Psoas muscle (tissue), 8 donors: ENCODE measurements at regions of chr6 and their contacts with region 1.

Region 1: GRCh38 chr6:73329201-73329600 is 24.9 kb downstream of the DPPA5 start:
- DNase-seq: no peak
- ATAC-seq: no peak
- H3K4me3 ChIP-seq: no peak overlapping the region
- H3K27ac ChIP-seq: no peak overlapping the region
- H3K4me1 ChIP-seq: no peaks in the 10 kb centered on the region
- H3K27me3 ChIP-seq: no peaks in the 10 kb centered on the region
- CTCF ChIP-seq: no peak

Region 2: GRCh38 chr6:73285674-73286283 is 43.4 kb before region 1 on chr6:
- intact Hi-C with region 1: loop called in 1 of 2 experiments (anchors 5 kb)
- DNase-seq: no peak
- ATAC-seq: no peak
- H3K4me3 ChIP-seq: no peak overlapping the region
- H3K27ac ChIP-seq: no peak overlapping the region
- H3K4me1 ChIP-seq: no peaks in the 10 kb centered on the region
- H3K27me3 ChIP-seq: no peaks in the 10 kb centered on the region
- CTCF ChIP-seq: peak; percentile 32

Region 3: DNA sequence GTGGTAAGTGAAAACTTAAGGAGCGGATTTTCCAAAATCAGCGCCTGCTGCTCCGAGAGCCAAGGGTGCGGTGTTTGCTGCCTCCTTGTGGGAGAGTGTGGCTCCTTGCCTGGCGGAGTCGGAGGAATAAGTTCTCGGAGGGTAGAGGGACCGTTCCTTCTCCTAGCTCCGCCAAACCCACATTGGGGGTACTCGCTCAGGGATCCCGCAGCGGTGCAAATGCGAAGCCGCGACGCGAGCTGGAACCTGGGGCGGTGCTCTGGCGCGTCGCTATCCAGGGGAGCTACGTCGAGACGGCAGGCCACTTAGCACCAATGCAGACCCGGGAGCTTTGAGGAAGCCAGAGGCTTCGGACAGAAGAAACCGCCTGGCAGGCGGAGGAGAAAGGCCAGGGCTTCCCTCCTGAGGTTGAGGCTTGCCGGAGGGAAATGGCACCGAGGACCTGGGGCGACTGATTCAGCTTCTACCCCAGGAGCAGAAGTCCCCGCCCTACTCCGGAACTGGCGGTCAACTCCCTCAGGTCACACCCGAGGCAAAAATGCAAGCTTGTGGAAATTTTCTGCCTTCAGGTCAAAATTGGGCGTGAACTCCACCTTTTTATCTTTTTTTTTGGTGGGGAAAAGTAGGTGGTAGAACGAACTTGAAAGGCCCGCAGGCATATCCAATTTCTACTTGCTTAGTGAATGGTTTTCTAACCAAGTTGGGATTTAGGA is 59.8 kb after region 1 on chr6:
- intact Hi-C with region 1: no loop called
- DNase-seq: peak; percentile 25 to 56
- ATAC-seq: peak in 3 of 4 donors; percentile 35 to 75 (median 58)
- H3K4me3 ChIP-seq: peak overlapping the region; percentile 65
- H3K27ac ChIP-seq: no peak overlapping the region
- H3K4me1 ChIP-seq: peaks cover 3% of the 10 kb centered on the region
- H3K27me3 ChIP-seq: no peaks in the 10 kb centered on the region
- CTCF ChIP-seq: peak; percentile 50